ENCODE measurements at regions of chr15 and their contacts with region 1.

Region 1: GRCh38 chr15:89732451-89733172 is 18.4 kb downstream of the MESP1 start:
- DNase-seq: no peak
- H3K4me3 ChIP-seq: no peak overlapping the region
- H3K27ac ChIP-seq: no peak overlapping the region
- H3K4me1 ChIP-seq: no peaks in the 10 kb centered on the region
- H3K27me3 ChIP-seq: no peaks in the 10 kb centered on the region
- CTCF ChIP-seq: no peak

Region 2: DNA sequence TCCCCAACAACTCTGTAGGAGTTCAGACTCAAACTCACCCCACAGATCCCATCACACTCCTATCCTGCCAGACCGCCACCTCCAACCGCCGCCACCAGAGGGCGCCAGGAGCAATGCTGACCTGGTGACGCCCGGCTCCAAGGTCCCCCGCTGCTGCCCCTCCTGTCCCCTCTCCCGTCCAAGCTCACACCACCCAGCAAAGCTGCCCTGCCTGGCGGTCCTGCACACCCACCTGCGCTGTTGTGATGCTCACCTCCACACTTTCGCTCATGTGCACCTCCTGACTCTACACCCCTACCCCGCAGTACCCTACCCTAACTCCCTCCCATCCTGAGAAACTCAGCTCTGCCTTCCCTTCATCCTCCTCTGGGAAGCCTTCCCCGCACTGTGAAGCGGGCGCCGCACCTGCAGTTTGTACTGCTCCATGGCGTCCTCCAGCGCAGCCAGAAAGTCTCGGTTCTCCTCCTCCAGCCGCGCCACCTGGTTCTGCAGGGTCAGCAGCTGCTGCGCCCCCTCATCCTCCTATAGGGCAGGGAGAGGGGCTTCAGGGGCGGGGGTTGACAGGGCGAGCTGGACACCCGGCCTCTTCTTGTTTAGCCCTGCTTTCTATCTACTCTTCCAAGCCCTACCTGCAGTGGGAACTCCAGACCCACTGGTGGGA is 85.3 kb before region 1 on chr15:
- intact Hi-C with region 1: loop called (anchors 10 kb)
- DNase-seq: peak; percentile 86
- H3K4me3 ChIP-seq: no peak overlapping the region
- H3K27ac ChIP-seq: no peak overlapping the region
- H3K4me1 ChIP-seq: no peaks in the 10 kb centered on the region
- H3K27me3 ChIP-seq: no peaks in the 10 kb centered on the region
- CTCF ChIP-seq: peak; percentile 77